Heart right ventricle (tissue), 16 donors: ENCODE measurements at regions of chr6 and their contacts with region 1.

Region 1: GRCh38 chr6:13360671-13361550 is 32.6 kb upstream of the TBC1D7 start:
- DNase-seq: peak; percentile 55
- ATAC-seq: peak; percentile 61 to 92 (median 85)
- H3K4me3 ChIP-seq: no peak overlapping the region
- H3K27ac ChIP-seq: peak overlapping the region; percentile 13 to 87 (median 54)
- H3K4me1 ChIP-seq: peaks cover 6 to 73% (median 49%) of the 10 kb centered on the region in 9 donors
- H3K27me3 ChIP-seq: no peaks in the 10 kb centered on the region
- CTCF ChIP-seq: no peak

Region 2: GRCh38 chr6:13395272-13396237 is 34.6 kb after region 1 on chr6:
- intact Hi-C with region 1: loop called in 2 of 10 experiments (anchors 5 kb)
- DNase-seq: peak; percentile 57 to 85
- ATAC-seq: peak; percentile 68 to 89 (median 78)
- H3K4me3 ChIP-seq: no peak overlapping the region
- H3K27ac ChIP-seq: peak overlapping the region; percentile 26 to 84 (median 77)
- H3K4me1 ChIP-seq: peaks cover 5 to 63% (median 57%) of the 10 kb centered on the region in 9 donors
- H3K27me3 ChIP-seq: no peaks in the 10 kb centered on the region
- CTCF ChIP-seq: no peak

Region 3: DNA sequence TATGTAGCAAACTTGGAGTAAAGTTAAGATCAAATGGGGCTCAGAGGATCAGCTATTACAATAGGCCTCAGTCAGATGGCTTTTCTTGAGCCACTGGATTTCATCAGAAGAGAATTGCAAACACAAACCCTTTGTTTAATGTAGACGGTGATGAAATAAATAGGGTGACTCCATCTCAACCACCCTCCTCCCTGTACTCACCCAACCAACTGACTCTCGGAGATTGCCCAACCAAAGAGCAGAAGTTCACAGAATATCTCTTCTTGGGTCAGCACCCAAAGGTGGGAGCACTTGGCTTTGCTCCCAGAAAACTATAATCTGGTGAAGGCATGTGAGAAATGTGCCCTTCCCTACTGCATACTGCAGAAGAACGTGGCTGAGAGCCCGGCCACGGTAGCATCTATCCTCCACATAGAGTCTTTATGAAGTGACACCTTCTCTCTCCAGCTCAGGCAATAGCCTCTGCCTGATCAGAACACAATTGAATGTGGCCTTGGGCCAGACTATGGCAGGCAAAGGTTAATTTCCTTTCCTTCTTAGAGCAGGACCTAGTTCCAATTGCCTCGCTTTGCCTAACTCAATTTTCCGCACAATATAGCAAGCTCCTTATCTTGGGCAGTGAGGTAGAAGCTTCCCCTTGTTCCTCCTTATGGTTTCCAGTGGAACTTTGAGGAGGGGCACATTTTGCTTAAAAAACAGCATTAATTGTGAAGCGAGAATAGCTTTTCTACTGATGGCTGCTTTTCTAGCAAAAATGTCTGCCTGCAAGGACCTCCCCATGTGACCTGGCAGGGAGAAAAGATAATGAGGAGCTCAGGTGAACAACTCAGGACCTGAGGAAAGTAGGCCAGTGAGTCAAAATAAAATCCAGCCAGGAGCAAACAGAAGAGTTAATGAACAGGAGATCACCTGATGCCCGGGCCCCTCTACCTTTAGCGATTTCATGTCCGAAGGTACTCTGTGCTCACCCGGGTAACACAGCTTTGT is 47.1 kb after region 1 on chr6:
- intact Hi-C with region 1: loop called in 2 of 10 experiments (anchors 5 kb)
- DNase-seq: peak in 1 of 2 donors; percentile 48
- ATAC-seq: peak in 7 of 8 donors; percentile 8 to 63 (median 35)
- H3K4me3 ChIP-seq: no peak overlapping the region
- H3K27ac ChIP-seq: peak overlapping the region; percentile 54 to 89 (median 82)
- H3K4me1 ChIP-seq: peaks cover 36 to 96% (median 91%) of the 10 kb centered on the region in 9 donors
- H3K27me3 ChIP-seq: no peaks in the 10 kb centered on the region
- CTCF ChIP-seq: no peak

Region 4: GRCh38 chr6:13413900-13414555 is 53.1 kb after region 1 on chr6:
- intact Hi-C with region 1: loop called in 2 of 10 experiments (anchors 5 kb)
- DNase-seq: peak in 1 of 2 donors; percentile 49
- ATAC-seq: peak; percentile 37 to 82 (median 72)
- H3K4me3 ChIP-seq: no peak overlapping the region
- H3K27ac ChIP-seq: peak overlapping the region; percentile 62 to 89 (median 83)
- H3K4me1 ChIP-seq: peaks cover 16 to 99% (median 81%) of the 10 kb centered on the region in 9 donors
- H3K27me3 ChIP-seq: no peaks in the 10 kb centered on the region
- CTCF ChIP-seq: peak in 3 of 9 donors; percentile 19 to 43 (median 42)

Region 5: GRCh38 chr6:13641315-13641714 is 280.4 kb after region 1 on chr6:
- intact Hi-C with region 1: no loop called
- DNase-seq: no peak
- ATAC-seq: no peak
- H3K4me3 ChIP-seq: no peak overlapping the region
- H3K27ac ChIP-seq: no peak overlapping the region
- H3K4me1 ChIP-seq: peaks cover 0 to 13% (median 3%) of the 10 kb centered on the region in 9 donors
- H3K27me3 ChIP-seq: no peaks in the 10 kb centered on the region
- CTCF ChIP-seq: no peak